Common myeloid progenitor, CD34-positive (primary cell): ENCODE measurements at regions of chr14 and their contacts with region 1.

Region 1: DNA sequence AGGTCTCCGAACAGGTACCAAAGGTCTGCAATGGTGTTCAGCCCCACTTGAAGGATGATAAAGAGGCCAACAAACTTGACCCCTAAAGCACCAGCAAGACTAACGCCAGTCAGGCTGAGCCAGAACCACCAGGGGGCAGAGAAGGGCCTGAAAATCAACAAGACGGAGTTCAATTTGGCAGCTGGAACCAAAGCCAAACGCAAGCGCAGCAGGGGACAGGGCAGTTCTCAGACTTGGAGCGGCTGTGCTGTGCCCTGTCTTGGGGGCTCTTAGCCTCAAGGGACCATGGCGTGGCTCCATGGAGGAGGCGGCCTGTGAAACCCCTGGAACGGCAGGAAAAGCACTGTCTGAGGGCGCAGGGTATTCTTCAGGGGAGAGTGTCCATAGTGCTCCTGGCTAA is 19.6 kb downstream of the POMT2 start:
- DNase-seq: peak; percentile 81 to 89 (median 83)
- H3K4me3 ChIP-seq: no peak overlapping the region
- H3K27ac ChIP-seq: no peak overlapping the region
- H3K4me1 ChIP-seq: peaks cover 0 to 8% (median 6%) of the 10 kb centered on the region in 4 experiments
- H3K27me3 ChIP-seq: no peaks in the 10 kb centered on the region

Region 2: GRCh38 chr14:77105145-77105939 is 195.8 kb before region 1 on chr14:
- CTCF ChIA-PET with region 1: no interaction called
- POLR2A ChIA-PET with region 1: no interaction called
- DNase-seq: no peak
- H3K4me3 ChIP-seq: no peak overlapping the region
- H3K27ac ChIP-seq: no peak overlapping the region
- H3K4me1 ChIP-seq: peaks cover 0 to 4% (median 0%) of the 10 kb centered on the region in 4 experiments
- H3K27me3 ChIP-seq: no peaks in the 10 kb centered on the region

Region 3: GRCh38 chr14:77278461-77279230 is 22.5 kb before region 1 on chr14:
- CTCF ChIA-PET with region 1: no interaction called
- POLR2A ChIA-PET with region 1: no interaction called
- DNase-seq: no peak
- H3K4me3 ChIP-seq: no peak overlapping the region
- H3K27ac ChIP-seq: no peak overlapping the region
- H3K4me1 ChIP-seq: no peaks in the 10 kb centered on the region
- H3K27me3 ChIP-seq: no peaks in the 10 kb centered on the region

Region 4: DNA sequence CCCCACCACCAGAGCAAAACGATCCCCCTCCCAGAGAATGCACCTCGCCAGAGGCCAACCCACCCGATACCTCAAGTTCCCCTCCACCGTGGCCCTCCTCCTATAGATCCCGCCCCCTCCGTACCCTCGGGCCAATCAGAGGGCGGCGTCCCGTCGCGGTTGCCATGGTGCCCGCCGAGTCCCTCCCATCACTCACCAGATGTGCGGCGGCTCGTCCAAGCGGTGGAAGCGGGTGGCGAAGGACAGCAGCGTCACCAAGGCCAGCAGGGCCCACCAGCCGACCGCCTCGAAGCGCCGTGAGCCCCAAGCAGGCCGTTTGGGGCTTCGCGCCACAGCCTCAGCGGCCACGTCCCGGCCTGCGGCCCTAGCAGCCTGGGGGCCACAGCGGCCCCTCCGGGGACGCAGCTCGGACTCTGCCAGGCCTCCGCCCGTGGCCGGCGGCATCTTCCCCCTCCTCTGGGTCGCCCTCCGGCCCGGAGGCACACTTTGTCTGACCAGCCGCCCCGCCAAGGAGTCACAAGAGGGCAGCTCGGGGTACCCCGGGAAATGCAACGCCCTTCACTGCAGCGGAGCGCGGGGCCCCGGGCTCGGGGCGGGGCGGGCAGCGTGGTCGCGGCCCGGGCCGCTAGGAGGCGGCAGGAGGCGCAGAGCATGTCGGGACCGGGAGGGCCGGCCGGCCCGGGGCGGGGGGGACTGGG is 19.3 kb after region 1 on chr14 and contains the start of gene POMT2:
- CTCF ChIA-PET with region 1: interaction called, 251 read pairs
- POLR2A ChIA-PET with region 1: no interaction called
- DNase-seq: peak; percentile 90 to 96 (median 96)
- H3K4me3 ChIP-seq: peak within 1 kb of the TSS; percentile 76 to 95 (median 87)
- H3K27ac ChIP-seq: peak within 1 kb of the TSS; percentile 89 to 93
- H3K4me1 ChIP-seq: peaks cover 8 to 22% (median 14%) of the 10 kb centered on the region in 4 experiments
- H3K27me3 ChIP-seq: no peaks in the 10 kb centered on the region